ENCODE measurements at regions of chr9 and their contacts with region 1.

Region 1: GRCh38 chr9:123268240-123268949 is at the start of gene STRBP:
- DNase-seq: peak; percentile 89 to 98 (median 95)
- H3K4me3 ChIP-seq: peak within 1 kb of the TSS; percentile 68 to 76
- H3K4me3 Mint-ChIP-seq: peak within 1 kb of the TSS; percentile 82 to 93 (median 90)
- H3K27ac ChIP-seq: peak within 1 kb of the TSS; percentile 63
- H3K27ac Mint-ChIP-seq: peak within 1 kb of the TSS; percentile 77 to 94 (median 89)
- H3K4me1 ChIP-seq: peaks cover 22% of the 10 kb centered on the region
- H3K4me1 Mint-ChIP-seq: peaks cover 19 to 33% (median 25%) of the 10 kb centered on the region in 4 donors
- H3K27me3 ChIP-seq: no peaks in the 10 kb centered on the region
- H3K27me3 Mint-ChIP-seq: no peaks in the 10 kb centered on the region
- total RNA-seq, gene STRBP: 21.1 to 23.8 TPM

Region 2: GRCh38 chr9:122940603-122941559 is 327.5 kb before region 1 on chr9 and contains the start of gene RABGAP1:
- CTCF ChIA-PET with region 1: no interaction called
- POLR2A ChIA-PET with region 1: no interaction called
- intact Hi-C with region 1: loop called (anchors 10 kb)
- DNase-seq: peak; percentile 94 to 99 (median 96)
- H3K4me3 ChIP-seq: peak within 1 kb of the TSS; percentile 80 to 88
- H3K4me3 Mint-ChIP-seq: peak within 1 kb of the TSS; percentile 89 to 98 (median 94)
- H3K27ac ChIP-seq: peak within 1 kb of the TSS; percentile 86
- H3K27ac Mint-ChIP-seq: peak within 1 kb of the TSS; percentile 91 to 98 (median 95)
- H3K4me1 ChIP-seq: peaks cover 26% of the 10 kb centered on the region
- H3K4me1 Mint-ChIP-seq: peaks cover 29 to 46% (median 33%) of the 10 kb centered on the region in 4 donors
- H3K27me3 ChIP-seq: no peaks in the 10 kb centered on the region
- H3K27me3 Mint-ChIP-seq: no peaks in the 10 kb centered on the region
- total RNA-seq, gene RABGAP1: 43.2 to 43.6 TPM

Region 3: GRCh38 chr9:123217148-123217585 is 51.2 kb before region 1 on chr9:
- CTCF ChIA-PET with region 1: no interaction called
- POLR2A ChIA-PET with region 1: no interaction called
- intact Hi-C with region 1: no loop called
- DNase-seq: no peak
- H3K4me3 ChIP-seq: no peak overlapping the region
- H3K4me3 Mint-ChIP-seq: no peak overlapping the region
- H3K27ac ChIP-seq: no peak overlapping the region
- H3K27ac Mint-ChIP-seq: no peak overlapping the region
- H3K4me1 ChIP-seq: no peaks in the 10 kb centered on the region
- H3K4me1 Mint-ChIP-seq: peaks cover 0 to 13% (median 4%) of the 10 kb centered on the region in 4 donors
- H3K27me3 ChIP-seq: no peaks in the 10 kb centered on the region
- H3K27me3 Mint-ChIP-seq: no peaks in the 10 kb centered on the region

Region 4: GRCh38 chr9:123322273-123323195 is 54.1 kb after region 1 on chr9:
- CTCF ChIA-PET with region 1: no interaction called
- POLR2A ChIA-PET with region 1: interaction called, 12 read pairs
- intact Hi-C with region 1: loop called (anchors 1 kb)
- DNase-seq: peak; percentile 66 to 82 (median 75)
- H3K4me3 ChIP-seq: peak overlapping the region in 1 of 2 donors; percentile 49
- H3K4me3 Mint-ChIP-seq: peak overlapping the region; percentile 32 to 82 (median 76)
- H3K27ac ChIP-seq: peak overlapping the region; percentile 44
- H3K27ac Mint-ChIP-seq: peak overlapping the region; percentile 70 to 96 (median 92)
- H3K4me1 ChIP-seq: peaks cover 28% of the 10 kb centered on the region
- H3K4me1 Mint-ChIP-seq: peaks cover 22 to 45% (median 28%) of the 10 kb centered on the region in 4 donors
- H3K27me3 ChIP-seq: no peaks in the 10 kb centered on the region
- H3K27me3 Mint-ChIP-seq: no peaks in the 10 kb centered on the region